Mucosa of descending colon (tissue), 3 donors: ENCODE measurements at regions of chr17 and their contacts with region 1.

Region 1: DNA sequence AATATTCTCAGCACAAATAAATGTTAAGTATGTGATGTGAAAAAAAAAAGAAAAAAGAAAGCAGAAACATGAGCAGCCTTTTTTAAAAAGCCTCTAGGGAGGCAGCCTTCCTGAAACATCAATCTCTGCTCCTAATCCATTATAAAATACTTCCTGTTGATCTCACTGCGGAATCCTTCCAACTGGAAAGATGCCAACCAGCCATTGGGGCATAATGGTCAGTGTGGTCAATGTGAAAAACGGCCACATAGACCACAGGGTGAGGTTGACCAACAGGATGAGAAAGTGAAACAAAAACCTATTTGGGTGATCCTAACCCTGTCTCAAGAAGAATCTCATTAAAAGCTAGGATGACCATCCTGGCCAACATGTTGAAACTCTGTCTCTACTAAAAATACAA is 26.1 kb upstream of the ABCA8 start:
- DNase-seq: peak in 1 of 3 donors; percentile 47
- ATAC-seq: peak; percentile 29
- H3K4me3 ChIP-seq: no peak overlapping the region
- H3K4me1 ChIP-seq: no peaks in the 10 kb centered on the region
- CTCF ChIP-seq: no peak

Region 2: DNA sequence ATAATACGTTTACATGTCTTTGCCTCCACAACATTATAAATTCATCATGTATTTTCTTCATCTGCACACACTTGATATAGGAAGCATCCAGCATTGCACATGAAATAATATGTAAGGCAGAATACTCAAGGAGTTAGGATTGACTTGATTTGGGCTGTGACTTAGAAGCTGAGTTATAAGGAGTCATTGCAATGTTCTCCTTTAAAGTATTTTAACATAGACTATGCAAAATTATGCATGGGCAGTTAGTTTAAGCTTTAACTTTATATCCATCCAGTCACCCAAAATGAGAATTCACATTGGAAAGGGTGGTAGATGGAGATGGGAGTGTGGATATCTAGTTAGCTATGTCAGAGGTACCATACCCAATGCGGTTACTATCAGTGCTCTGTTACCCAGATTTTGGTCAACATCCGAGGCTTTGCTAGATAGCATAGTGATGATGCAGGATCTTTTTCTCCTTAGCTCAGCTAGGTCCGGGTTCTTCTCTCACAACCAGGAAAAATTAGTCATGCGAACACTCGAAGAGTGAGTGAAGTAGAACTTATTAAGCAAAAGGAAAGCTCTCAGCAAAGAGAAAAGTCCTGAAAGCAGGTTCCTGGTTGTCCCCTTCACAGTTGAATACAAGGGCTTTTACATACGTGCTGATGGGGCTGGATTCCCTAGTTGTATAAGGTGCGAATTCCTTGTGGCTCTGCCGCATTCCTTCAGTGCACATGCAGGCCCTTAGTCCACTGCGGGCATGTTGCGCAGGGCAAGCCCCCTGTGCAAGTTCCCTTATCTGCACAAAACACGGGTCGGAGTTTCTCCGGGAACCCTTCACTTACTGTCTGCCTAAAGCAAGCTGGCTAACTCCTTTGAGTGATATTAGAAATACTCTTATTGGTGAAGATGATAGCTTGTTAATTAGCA is 307.0 kb before region 1 on chr17:
- intact Hi-C with region 1: no loop called
- DNase-seq: no peak
- ATAC-seq: no peak
- H3K4me3 ChIP-seq: no peak overlapping the region
- H3K4me1 ChIP-seq: no peaks in the 10 kb centered on the region
- CTCF ChIP-seq: no peak

Region 3: GRCh38 chr17:68785565-68786524 is 195.4 kb before region 1 on chr17:
- intact Hi-C with region 1: loop called in 1 of 2 experiments (anchors 5 kb)
- DNase-seq: no peak
- ATAC-seq: no peak
- H3K4me3 ChIP-seq: no peak overlapping the region
- H3K4me1 ChIP-seq: no peaks in the 10 kb centered on the region
- CTCF ChIP-seq: no peak

Region 4: DNA sequence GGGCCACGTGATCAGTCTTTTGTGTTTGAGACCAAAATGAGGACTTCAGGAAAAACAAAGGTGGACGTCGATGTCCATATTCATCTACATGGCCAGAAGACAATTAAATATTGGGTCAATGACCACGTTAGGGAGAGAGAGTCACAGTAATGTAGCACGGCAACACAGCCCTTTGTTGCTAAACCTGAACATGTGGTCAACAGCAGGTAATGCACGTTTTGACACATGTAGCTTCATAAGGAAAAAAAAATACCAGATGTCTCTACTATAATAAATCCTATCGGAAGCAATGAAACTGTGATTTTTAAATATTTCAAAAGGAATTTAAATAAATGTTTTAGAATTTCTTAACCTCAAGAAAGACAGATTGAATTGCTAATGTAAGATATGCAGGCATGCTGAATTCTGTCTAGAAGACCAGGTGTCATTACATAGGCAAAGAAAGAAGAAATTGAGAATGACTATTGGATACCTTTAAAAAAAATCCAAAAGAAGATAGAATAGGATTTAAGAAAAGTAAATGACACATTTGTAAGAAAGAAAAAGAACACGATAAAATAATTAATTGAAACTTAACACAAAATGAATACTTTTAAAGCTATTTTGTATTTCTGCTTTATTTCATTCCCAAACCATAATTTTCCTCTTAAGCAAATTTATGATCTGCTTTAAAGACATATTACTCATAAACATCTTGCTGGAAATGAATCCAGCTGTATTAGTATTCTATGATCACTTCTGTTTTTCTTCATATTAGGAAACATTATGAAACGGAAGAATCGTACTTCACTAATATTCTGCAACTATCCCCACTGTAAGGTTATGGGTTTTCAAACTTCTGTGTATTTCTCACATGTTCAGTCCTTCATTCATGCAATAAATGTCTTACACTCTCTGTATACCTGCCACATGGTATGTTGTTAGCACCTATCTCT is 56.2 kb before region 1 on chr17:
- intact Hi-C with region 1: no loop called
- DNase-seq: no peak
- ATAC-seq: no peak
- H3K4me3 ChIP-seq: no peak overlapping the region
- H3K4me1 ChIP-seq: no peaks in the 10 kb centered on the region
- CTCF ChIP-seq: no peak

Region 5: DNA sequence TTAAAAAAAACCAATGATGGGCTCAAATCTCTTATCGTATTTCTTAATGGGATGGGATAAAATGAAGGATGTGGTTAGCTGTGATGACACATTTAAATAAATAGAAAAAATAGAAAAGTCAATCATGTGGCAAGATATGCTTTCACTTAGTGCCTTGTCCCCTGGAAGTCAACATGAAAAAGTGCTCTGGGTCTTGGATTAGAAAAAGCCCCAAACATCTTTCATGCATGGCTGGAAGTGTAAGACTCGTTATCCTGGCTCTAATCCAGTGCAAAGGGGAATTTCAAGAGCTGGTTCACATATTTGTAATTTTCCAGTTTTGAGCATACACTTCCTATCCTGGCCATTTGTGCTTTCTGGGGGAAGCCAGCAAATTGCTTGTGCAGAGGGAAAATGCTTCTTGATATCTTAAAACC is 594.1 kb after region 1 on chr17:
- intact Hi-C with region 1: no loop called
- DNase-seq: no peak
- ATAC-seq: no peak
- H3K4me3 ChIP-seq: no peak overlapping the region
- H3K4me1 ChIP-seq: no peaks in the 10 kb centered on the region
- CTCF ChIP-seq: no peak